ENCODE measurements at regions of chr11 and their contacts with region 1.

Region 1: DNA sequence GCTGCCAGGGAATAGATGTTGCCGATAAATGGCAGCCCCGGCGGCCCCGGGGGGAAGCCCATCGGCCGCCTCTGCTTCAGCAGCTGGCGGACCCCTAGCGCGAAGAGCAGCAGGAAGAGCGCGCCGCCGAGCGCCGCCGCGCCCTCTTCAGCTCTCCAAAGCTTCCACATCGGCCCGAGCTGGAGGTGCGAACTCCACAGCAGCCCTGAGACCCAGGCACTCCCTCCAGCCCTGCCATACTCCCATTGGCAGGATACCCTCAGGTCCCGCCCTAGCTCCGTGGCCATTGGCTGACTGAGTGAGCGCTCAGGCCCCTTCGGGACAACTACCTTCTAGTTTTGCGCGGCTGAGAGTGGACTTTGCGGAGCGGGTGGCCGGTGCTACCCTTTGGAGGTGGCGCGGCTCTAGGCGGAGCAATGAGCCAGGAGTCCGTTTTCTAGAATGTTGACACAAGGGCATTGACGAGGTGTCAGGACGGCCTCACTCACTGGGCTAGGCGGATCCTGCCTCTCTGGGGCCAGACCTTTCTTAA is at the start of gene CYP2R1:
- DNase-seq: peak; percentile 95
- H3K4me3 Mint-ChIP-seq: peak within 1 kb of the TSS; percentile 93
- H3K27ac Mint-ChIP-seq: peak within 1 kb of the TSS; percentile 100
- H3K4me1 Mint-ChIP-seq: peaks cover 47% of the 10 kb centered on the region
- H3K27me3 Mint-ChIP-seq: no peaks in the 10 kb centered on the region
- total RNA-seq, gene CYP2R1: 14.6 to 14.8 TPM

Region 2: DNA sequence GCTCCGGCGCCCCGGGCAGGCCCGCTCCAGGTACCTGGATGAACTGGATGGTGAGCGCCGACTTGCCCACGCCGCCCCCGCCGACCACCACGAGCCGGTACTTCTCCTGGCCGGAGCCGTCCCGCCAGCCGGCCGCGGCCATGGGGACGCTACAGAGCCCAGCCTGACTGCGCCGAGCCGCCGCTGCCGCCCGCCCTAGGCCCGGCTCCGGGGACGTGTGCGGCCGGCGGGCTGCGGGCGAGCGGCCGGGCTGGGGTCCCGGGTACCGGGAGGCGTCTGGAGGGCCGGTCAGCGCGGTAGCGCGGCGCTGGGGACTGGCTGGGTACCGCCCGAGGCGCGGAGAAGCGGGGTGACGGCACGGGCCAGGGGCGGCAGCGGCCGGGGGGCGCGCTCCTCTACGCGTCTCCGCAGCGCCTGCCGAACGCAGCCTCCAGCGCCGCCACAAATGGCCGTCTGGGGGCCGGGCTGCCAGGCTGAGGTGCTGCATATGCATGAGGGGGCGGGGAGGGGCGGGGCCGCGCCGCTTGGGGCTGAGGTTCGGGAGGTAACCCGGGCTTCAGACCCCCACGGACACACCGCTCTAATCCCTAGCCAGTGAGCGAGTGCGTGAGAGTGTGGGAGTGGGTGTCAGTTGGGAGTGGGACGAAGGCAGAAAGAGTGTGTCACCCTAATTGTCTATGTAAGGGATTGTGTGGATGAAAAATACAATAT is 533.2 kb before region 1 on chr11 and contains the start of gene RRAS2:
- CTCF ChIA-PET with region 1: no interaction called
- POLR2A ChIA-PET with region 1: no interaction called
- intact Hi-C with region 1: loop called (anchors 10 kb)
- DNase-seq: peak; percentile 83
- H3K4me3 Mint-ChIP-seq: peak within 1 kb of the TSS; percentile 92
- H3K27ac Mint-ChIP-seq: peak within 1 kb of the TSS; percentile 81
- H3K4me1 Mint-ChIP-seq: peaks cover 32% of the 10 kb centered on the region
- H3K27me3 Mint-ChIP-seq: no peaks in the 10 kb centered on the region
- total RNA-seq, gene RRAS2: 37.7 to 39.5 TPM

Region 3: GRCh38 chr11:14519917-14520746 is 372.0 kb before region 1 on chr11 and contains the start of gene PSMA1:
- CTCF ChIA-PET with region 1: interaction called, 7 read pairs
- POLR2A ChIA-PET with region 1: interaction called, 22 read pairs
- intact Hi-C with region 1: loop called (anchors 1 kb)
- DNase-seq: peak; percentile 97
- H3K4me3 Mint-ChIP-seq: peak within 1 kb of the TSS; percentile 96
- H3K27ac Mint-ChIP-seq: peak within 1 kb of the TSS; percentile 97
- H3K4me1 Mint-ChIP-seq: peaks cover 28% of the 10 kb centered on the region
- H3K27me3 Mint-ChIP-seq: no peaks in the 10 kb centered on the region
- total RNA-seq, gene PSMA1: 332 to 339 TPM

Region 4: DNA sequence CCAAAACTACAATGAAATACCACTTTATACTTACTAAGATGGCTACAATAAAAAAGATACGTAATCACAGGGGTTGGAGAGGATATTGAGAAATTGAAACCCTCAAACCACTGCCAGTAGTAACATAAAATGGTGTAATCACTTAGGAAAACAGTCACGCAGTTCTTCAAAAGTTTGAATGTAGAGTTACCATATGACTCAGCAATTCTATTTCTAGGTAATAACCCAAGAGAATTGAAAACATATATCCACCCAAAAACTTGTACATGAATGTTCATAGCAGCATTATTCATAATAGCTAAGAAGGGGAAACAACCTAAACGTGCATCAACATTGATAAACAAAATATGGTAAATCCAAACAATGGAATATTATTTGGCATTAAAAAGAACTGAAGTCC is 347.5 kb before region 1 on chr11:
- CTCF ChIA-PET with region 1: interaction called, 3 read pairs
- POLR2A ChIA-PET with region 1: no interaction called
- intact Hi-C with region 1: loop called (anchors 1 kb)
- DNase-seq: no peak
- H3K4me3 Mint-ChIP-seq: no peak overlapping the region
- H3K27ac Mint-ChIP-seq: peak overlapping the region; percentile 82
- H3K4me1 Mint-ChIP-seq: peaks cover 39% of the 10 kb centered on the region
- H3K27me3 Mint-ChIP-seq: no peaks in the 10 kb centered on the region

Region 5: GRCh38 chr11:14643697-14644225 is 248.3 kb before region 1 on chr11 and contains the start of gene PDE3B:
- CTCF ChIA-PET with region 1: interaction called, 15 read pairs
- POLR2A ChIA-PET with region 1: interaction called, 29 read pairs
- intact Hi-C with region 1: loop called (anchors 1 kb)
- DNase-seq: peak; percentile 87
- H3K4me3 Mint-ChIP-seq: peak within 1 kb of the TSS; percentile 71
- H3K27ac Mint-ChIP-seq: peak within 1 kb of the TSS; percentile 89
- H3K4me1 Mint-ChIP-seq: peaks cover 49% of the 10 kb centered on the region
- H3K27me3 Mint-ChIP-seq: no peaks in the 10 kb centered on the region
- total RNA-seq, gene PDE3B: 21.6 to 21.8 TPM

Region 6: GRCh38 chr11:14764579-14765527 is 127.2 kb before region 1 on chr11:
- CTCF ChIA-PET with region 1: interaction called, 5 read pairs
- POLR2A ChIA-PET with region 1: interaction called, 10 read pairs
- intact Hi-C with region 1: loop called (anchors 1 kb)
- DNase-seq: peak; percentile 31
- H3K4me3 Mint-ChIP-seq: peak overlapping the region; percentile 48
- H3K27ac Mint-ChIP-seq: no peak overlapping the region
- H3K4me1 Mint-ChIP-seq: peaks cover 30% of the 10 kb centered on the region
- H3K27me3 Mint-ChIP-seq: no peaks in the 10 kb centered on the region

Region 7: DNA sequence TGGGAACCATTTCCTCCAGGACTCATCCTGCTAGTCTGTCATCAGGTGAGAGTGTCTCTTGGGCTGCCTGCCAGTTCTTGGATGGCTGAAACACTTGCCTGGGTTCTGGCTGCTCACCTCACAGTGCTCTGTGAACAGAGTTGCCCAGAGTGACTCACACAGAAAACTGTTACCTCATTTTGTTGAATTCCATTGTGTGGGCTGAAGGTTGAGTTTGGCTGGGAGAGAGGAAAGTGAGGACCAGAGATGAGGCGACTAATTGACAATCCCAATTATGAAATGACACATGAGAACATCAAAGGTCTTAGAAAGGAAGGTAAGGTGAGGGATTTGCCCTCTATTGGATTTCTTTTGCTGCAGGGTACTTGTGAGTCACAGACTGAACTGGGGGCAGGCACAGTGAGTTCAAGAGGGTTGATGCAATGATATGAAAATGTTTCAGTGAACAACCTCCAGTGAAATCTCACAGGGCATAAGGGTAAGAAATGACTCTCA is 161.1 kb after region 1 on chr11:
- CTCF ChIA-PET with region 1: no interaction called
- POLR2A ChIA-PET with region 1: no interaction called
- intact Hi-C with region 1: loop called (anchors 1 kb)
- DNase-seq: peak; percentile 56
- H3K4me3 Mint-ChIP-seq: no peak overlapping the region
- H3K27ac Mint-ChIP-seq: peak overlapping the region; percentile 61
- H3K4me1 Mint-ChIP-seq: peaks cover 19% of the 10 kb centered on the region
- H3K27me3 Mint-ChIP-seq: peaks cover 3% of the 10 kb centered on the region

Measured in activated CD4-positive, alpha-beta memory T cell treated with anti-CD3 and anti-CD28 coated beads for 36 hours (primary cell).